ENCODE measurements at regions of chr22 and their contacts with region 1.

Region 1: GRCh38 chr22:43346521-43346929 is 3.4 kb upstream of the SCUBE1 start:
- DNase-seq: peak in 3 of 10 donors; percentile 18 to 55 (median 39)
- H3K4me3 ChIP-seq: no peak overlapping the region
- H3K27ac ChIP-seq: no peak overlapping the region
- H3K27me3 ChIP-seq: peaks cover 0 to 76% (median 43%) of the 10 kb centered on the region in 45 donors
- CTCF ChIP-seq: peak in 54 of 56 donors; percentile 20 to 74 (median 52)

Region 2: DNA sequence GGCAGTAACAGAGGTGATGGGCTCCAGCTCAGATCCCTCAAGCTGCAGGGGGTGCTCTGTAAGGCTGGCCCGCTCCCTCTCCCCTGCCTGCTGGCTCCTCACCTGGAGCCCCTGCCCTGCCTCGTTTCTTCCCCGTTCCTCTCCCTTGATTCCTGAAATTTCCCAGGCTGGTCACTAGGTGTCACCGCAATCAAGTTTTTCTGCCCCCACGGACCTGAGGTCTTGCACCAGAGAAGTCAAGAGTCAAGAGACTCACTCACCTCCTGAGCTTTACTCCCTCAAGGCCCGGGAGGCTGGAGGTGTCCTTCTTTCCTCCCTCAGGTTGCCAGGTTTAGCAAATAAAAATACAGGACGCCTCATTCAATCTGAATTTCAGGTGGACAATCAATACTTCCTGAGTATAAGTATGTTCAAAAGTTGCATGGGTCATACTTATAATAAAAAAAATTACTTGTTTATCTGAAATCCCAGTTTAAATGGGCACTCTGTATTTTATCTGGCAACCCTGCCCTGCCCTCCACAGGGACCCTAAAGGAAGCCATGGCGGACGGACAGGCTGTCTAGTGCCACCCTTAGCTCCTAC is 72.5 kb before region 1 on chr22:
- intact Hi-C with region 1: loop called (anchors 2 to 5 kb)
- DNase-seq: peak in 5 of 10 donors; percentile 10 to 58 (median 26)
- H3K4me3 ChIP-seq: no peak overlapping the region
- H3K27ac ChIP-seq: no peak overlapping the region
- H3K27me3 ChIP-seq: peaks cover 0 to 6% (median 0%) of the 10 kb centered on the region in 45 donors
- CTCF ChIP-seq: peak; percentile 37 to 81 (median 71)

Region 3: DNA sequence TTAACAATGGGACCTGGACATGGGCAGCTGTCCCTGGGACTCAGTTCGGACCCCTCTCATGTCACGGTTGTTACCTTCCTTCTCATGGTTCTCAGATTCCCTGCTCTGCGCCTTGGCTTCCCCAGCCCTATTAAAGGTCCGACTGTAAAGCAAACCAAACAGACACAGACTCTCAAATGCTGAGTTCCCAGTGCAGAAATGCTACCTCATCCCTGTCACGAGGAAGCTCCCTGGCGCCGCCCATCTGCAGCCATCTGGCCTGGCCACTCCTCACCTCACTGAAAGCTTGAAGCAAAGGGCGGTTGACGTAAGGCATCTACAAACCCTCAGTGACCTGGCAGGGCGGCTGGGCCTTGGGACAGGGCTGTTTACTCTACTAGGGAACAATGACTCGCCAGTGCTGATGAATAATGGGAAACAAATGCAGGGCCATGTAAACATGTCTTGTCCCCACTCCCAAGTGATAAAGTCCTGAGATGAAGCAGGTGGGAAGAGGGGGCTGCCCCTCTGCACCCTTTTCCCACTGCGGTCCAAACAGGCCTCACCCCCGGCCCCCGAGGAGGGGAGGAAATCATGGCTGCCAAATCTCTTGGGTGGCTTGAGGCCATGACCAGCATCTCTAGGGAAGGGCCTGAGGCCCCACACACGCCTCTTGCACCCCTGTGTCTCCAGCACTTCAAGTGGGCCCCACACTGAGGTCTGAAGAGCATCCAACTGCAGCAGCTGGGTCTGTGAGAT is 52.7 kb before region 1 on chr22:
- intact Hi-C with region 1: no loop called
- DNase-seq: peak in 1 of 10 donors; percentile 28
- H3K4me3 ChIP-seq: no peak overlapping the region
- H3K27ac ChIP-seq: peak overlapping the region in 3 of 59 donors; percentile 34 to 64 (median 53)
- H3K27me3 ChIP-seq: peaks cover 0 to 4% (median 0%) of the 10 kb centered on the region in 45 donors
- CTCF ChIP-seq: no peak

Measured in dorsolateral prefrontal cortex (tissue), 120 donors.